Stomach (tissue), 19 donors: ENCODE measurements at regions of chr7 and their contacts with region 1.

Region 1: DNA sequence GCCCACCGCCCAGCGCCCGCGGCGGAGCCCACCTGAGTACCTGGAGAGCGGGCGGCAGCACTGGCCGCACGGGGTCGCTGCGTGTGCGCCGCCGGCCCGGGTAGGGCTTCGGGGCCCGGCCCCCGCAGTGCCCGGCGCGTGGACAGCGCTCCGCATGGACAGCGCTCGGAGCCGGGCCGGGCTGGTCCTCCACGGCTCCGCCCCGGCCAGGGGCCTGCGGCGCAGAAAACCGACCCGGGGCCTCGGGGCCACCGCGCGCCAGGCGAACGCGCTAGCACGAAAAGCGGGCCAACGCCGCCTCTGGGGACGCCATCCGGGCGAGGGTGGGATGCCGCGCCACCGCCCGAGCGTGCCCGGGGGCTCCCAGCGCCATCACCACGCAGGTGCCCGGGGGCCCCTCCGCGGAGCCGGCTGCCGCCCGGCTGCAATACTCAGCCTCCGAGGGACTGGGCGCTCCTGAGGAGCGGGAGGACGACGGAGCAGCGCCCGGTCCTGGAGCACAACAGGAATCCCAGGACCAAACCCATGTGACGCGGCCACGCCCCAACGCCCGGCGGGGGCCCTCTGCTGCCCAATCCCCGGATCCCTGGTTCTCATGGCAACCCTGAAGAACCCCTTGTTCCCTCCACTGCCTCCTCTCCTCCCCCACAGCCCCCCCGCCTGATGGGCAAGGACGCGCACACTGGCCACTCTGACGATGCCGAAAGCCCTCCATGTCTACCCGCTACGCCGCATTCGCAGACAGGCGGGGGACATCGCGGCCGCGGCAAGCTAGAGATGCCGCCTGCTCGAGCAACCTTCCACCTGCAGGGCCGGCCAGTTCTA is at the start of gene GRB10:
- DNase-seq: peak in 1 of 2 donors; percentile 70
- H3K4me3 ChIP-seq: peak within 1 kb of the TSS; percentile 49 to 65 (median 59)
- H3K27ac ChIP-seq: peak within 1 kb of the TSS in 3 of 5 donors; percentile 24 to 68 (median 32)
- H3K4me1 ChIP-seq: peaks cover 14 to 77% (median 54%) of the 10 kb centered on the region in 4 donors
- H3K27me3 ChIP-seq: no peaks in the 10 kb centered on the region
- CTCF ChIP-seq: peak in 1 of 7 experiments; percentile 45
- EP300 ChIP-seq: no peak
- POLR2A ChIP-seq: no peak
- total RNA-seq, gene GRB10: 45.1 to 84.9 (median 68.8) TPM

Region 2: DNA sequence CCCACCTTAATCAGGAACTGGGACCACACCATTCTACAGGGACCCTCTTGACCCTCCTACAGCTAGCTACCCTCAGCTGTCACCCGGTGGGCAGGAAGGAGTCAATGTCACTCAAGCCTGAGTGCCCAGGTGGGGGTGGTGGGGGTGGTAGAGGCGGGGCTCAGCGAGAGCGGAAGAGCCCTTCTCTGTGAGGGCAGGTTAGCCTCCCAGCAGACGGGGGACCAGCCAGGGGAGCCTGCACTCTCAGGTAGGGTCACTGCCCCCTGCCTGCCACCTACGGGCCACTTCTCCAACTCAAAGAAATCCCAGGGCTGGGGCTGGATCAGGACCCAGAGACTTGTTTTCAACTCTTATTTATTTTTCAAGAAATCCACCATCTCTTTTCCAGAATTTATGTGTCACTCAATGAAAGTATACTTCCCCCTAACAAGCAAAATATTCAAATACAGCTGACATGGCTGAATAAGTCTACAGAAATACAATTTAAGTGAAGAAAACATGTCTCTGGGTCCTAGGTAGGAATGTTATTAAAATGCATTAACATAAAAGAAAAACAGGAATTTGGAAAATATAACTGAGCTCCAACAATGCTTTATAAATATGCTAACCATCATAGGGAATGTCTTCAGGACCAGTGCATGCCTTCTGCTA is 154.0 kb before region 1 on chr7:
- intact Hi-C with region 1: no loop called
- DNase-seq: no peak
- H3K4me3 ChIP-seq: no peak overlapping the region
- H3K27ac ChIP-seq: no peak overlapping the region
- H3K4me1 ChIP-seq: peaks cover 5 to 22% (median 20%) of the 10 kb centered on the region in 4 donors
- H3K27me3 ChIP-seq: no peaks in the 10 kb centered on the region
- CTCF ChIP-seq: no peak
- EP300 ChIP-seq: no peak
- POLR2A ChIP-seq: no peak

Region 3: DNA sequence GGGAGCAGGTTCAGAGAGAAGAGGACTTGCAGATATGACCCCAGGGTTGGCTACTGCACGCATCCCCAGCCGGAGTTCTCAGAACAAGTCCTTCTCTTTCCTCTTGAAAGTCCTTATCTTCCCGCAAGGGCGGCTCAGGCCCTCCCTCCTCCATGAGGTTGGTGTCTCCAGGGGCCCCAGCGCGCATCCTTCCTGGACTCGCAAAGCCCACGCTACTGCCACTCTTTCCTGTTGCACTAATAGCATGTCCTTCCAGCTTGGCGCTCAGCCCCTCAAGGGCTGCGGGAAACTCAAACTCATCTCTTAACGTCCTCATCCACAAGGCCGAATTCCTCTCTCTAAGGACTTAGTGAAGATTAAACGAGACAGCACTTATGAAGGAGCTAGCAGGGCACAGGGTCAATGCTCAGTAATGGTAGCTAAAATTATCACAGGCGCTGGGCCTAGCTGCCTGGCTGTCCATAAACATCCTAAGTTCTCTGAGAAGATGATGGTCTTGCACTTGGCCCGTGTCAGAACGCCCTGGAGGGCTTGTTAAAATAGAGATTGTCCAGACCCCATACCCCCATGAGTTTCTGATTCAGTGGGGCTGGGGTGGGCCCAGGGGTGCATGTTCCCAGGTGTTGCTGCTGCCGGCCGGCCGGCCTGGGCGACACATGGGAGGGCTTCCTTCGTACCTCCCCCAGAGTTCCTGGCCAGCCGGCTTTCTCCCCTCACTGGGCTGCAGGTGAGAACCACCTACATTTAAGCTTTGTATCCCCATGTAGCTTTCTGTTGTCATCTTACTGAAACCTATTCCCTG is 272.6 kb after region 1 on chr7:
- intact Hi-C with region 1: loop called (anchors 10 kb)
- DNase-seq: no peak
- H3K4me3 ChIP-seq: no peak overlapping the region
- H3K27ac ChIP-seq: no peak overlapping the region
- H3K4me1 ChIP-seq: peaks cover 0 to 4% (median 0%) of the 10 kb centered on the region in 4 donors
- H3K27me3 ChIP-seq: no peaks in the 10 kb centered on the region
- CTCF ChIP-seq: no peak
- EP300 ChIP-seq: no peak
- POLR2A ChIP-seq: no peak